Ovary (tissue), 10 donors: ENCODE measurements at regions of chr14 and their contacts with region 1.

Region 1: GRCh38 chr14:60248697-60249318 is at the start of gene PPM1A:
- DNase-seq: peak; percentile 96 to 98 (median 97)
- H3K4me3 ChIP-seq: peak within 1 kb of the TSS; percentile 91
- H3K27ac ChIP-seq: peak within 1 kb of the TSS; percentile 97 to 99
- H3K4me1 ChIP-seq: peaks cover 4% of the 10 kb centered on the region
- H3K27me3 ChIP-seq: no peaks in the 10 kb centered on the region
- CTCF ChIP-seq: peak in 1 of 3 donors; percentile 7
- EP300 ChIP-seq: peak; percentile 65
- POLR2A ChIP-seq: peak; percentile 96
- total RNA-seq, gene PPM1A: 24.4 to 44.7 (median 43.2) TPM

Region 2: DNA sequence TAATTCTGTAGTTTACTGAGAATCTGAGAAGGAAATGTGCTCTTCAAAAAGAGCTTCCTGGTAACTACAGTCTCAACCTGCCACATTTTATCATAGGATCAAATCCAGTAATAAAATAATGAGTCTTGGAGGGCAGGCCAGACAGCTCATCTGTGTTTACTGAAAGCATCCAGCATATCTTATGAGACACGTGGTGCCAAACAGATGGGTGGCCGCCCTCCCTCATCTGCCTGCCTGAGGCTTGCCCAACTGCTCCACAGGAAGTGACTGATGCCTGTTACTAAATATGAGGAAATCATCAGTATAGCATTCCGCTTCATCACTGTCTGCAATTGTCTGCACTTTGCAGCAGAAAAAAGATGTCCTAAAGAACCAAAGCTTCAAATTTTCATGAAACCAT is 97.1 kb before region 1 on chr14:
- intact Hi-C with region 1: loop called in 1 of 4 experiments (anchors 10 kb)
- DNase-seq: peak in 3 of 5 donors; percentile 29 to 49 (median 44)
- H3K4me3 ChIP-seq: no peak overlapping the region
- H3K27ac ChIP-seq: no peak overlapping the region
- H3K4me1 ChIP-seq: peaks cover 1% of the 10 kb centered on the region
- H3K27me3 ChIP-seq: no peaks in the 10 kb centered on the region
- CTCF ChIP-seq: no peak
- EP300 ChIP-seq: no peak
- POLR2A ChIP-seq: no peak

Region 3: GRCh38 chr14:60164712-60165546 is 83.9 kb before region 1 on chr14 and contains the start of gene DHRS7:
- intact Hi-C with region 1: loop called in 1 of 4 experiments (anchors 2 kb)
- DNase-seq: peak; percentile 75 to 88 (median 82)
- H3K4me3 ChIP-seq: peak within 1 kb of the TSS; percentile 71
- H3K27ac ChIP-seq: peak within 1 kb of the TSS; percentile 80 to 88
- H3K4me1 ChIP-seq: peaks cover 9% of the 10 kb centered on the region
- H3K27me3 ChIP-seq: no peaks in the 10 kb centered on the region
- CTCF ChIP-seq: peak in 2 of 3 donors; percentile 28 to 39
- EP300 ChIP-seq: no peak
- POLR2A ChIP-seq: peak; percentile 56
- total RNA-seq, gene DHRS7: 57.5 to 71.6 (median 59.7) TPM